Esophagus muscularis mucosa (tissue), 4 donors: ENCODE measurements at regions of chr20 and their contacts with region 1.

Region 1: DNA sequence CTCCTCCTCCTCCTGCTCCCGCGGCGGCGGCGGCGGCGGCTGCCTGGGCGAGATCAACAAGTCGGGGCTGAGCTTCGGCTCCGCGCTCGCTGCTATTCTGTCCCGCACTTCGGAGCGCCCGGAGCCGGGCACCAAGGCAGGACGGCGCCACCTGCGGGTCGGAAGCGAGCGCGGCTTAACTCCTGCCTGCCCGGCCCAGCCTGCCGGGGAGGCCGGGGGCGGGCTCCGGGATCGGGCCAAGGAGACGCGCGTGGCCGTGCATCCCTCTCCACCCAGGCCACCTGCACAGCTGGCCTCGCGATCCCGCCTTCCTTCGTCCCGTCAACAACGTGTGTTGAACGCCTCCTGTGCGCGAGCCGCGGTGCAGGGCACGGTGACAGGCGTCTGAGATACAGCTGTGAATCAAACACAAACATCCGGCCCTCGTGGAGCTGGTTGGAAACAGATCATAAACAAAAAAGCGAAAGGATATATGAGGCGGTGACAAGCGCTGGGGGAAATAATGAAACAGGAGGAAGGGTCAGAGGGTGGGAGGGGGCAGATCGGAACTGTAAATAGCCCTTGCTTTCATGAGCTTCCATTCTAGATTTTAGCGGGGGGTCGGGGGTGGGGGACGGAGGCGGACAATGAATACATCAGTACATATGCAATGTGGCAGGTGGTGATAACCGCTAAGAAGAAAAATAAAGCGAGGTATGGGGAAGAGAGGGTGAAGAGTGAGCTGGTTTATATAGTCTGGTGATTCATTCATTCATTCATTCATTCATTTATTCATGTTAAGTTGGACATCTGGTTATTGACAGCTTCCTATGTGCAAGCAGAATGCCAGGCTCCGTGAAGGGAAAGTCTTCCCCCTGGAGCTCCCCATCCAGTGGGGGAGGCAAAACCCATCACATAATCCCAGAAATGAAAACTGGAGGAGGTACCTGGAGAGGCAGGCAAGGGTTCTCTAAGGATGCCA is 2.0 kb upstream of the KCNB1 start:
- DNase-seq: no peak
- H3K4me3 ChIP-seq: peak overlapping the region; percentile 71 to 77 (median 73)
- H3K27ac ChIP-seq: peak overlapping the region; percentile 34 to 92 (median 88)
- H3K4me1 ChIP-seq: peaks cover 12 to 54% (median 51%) of the 10 kb centered on the region in 4 donors
- H3K27me3 ChIP-seq: peaks cover 0 to 18% (median 0%) of the 10 kb centered on the region in 4 donors
- CTCF ChIP-seq: peak; percentile 85 to 88 (median 86)
- EP300 ChIP-seq: no peak
- POLR2A ChIP-seq: no peak

Region 2: DNA sequence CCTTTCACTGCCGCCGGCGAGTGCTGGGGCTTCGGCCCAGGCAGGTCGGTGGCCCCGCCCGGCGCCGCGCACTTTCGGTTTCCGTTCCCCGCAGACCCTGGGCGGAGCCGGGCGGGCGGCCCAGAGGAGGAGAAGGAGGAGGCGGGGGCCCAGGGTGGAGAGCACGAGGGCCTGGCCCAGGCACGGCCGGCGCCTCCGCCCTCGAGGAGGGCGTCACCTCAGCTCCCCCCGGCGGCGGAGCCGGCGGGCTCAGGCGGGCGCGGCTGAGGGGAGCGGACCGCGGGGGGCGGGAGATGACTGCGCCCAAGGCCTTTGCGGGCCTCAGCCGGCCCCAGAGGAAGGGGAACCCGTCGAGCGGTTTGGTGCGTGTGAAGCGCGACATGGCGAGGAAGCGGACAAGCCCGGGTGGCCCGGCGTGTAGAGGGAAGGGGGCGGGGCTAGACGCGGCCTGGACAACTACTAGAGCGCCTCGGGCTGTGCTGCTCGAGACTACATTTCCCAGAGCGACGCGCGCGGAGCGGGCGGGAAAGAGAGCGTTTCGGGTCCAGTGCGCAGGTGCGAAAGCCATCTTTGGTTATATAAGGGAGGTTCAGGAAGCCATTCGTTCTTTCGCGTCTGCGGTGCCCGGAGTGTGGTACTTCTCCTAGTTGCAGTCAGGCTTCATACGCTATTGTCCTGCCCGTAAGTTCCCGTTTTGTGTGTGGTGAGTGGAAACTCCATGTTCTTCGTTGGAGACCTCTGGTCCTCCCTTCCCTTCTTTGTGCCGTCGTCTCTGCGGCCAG is 206.2 kb before region 1 on chr20 and contains the start of gene ZNFX1:
- intact Hi-C with region 1: no loop called
- DNase-seq: peak; percentile 99
- H3K4me3 ChIP-seq: peak within 1 kb of the TSS; percentile 77 to 98 (median 87)
- H3K27ac ChIP-seq: peak within 1 kb of the TSS; percentile 91 to 99 (median 96)
- H3K4me1 ChIP-seq: peaks cover 39 to 80% (median 71%) of the 10 kb centered on the region in 4 donors
- H3K27me3 ChIP-seq: no peaks in the 10 kb centered on the region
- CTCF ChIP-seq: no peak
- EP300 ChIP-seq: no peak
- POLR2A ChIP-seq: peak; percentile 98
- total RNA-seq, gene ZNFX1: 35.7 to 46.7 (median 41.3) TPM

Region 3: GRCh38 chr20:49338061-49338460 is 146.4 kb before region 1 on chr20:
- intact Hi-C with region 1: loop called (anchors 2 kb)
- DNase-seq: no peak
- H3K4me3 ChIP-seq: no peak overlapping the region
- H3K27ac ChIP-seq: no peak overlapping the region
- H3K4me1 ChIP-seq: peaks cover 0 to 37% (median 22%) of the 10 kb centered on the region in 4 donors
- H3K27me3 ChIP-seq: no peaks in the 10 kb centered on the region
- CTCF ChIP-seq: no peak
- EP300 ChIP-seq: no peak
- POLR2A ChIP-seq: no peak

Region 4: DNA sequence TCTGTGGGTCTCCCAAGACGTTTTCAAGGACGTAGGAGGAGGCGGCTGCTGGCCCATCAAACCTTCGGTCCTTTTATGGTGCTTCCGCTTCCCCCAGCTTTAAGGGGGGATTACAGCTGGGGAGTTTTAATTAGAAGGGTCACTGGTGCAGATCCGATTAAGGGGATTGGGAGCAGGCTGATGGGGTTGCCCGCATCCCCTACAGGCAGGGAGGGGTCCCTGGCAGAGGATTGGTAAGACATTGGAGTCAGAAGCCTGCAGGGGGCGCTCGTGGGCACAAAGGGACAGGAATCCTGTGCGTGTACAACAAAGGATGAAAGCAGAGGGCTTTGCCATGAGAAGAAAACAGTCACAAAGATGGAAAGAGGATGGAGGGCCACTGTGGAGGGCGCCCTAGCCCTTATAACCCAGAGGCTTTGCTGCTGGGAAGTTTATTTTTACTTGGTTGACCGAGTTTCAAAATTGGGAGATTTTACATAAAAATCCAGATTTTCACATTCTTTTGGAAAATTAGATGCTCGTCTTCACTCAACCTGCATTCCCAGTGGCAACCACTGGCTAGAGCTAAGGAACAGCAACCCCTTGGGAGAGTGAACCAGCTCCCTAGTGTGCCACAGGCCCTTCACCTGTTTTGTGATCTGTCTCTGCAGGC is 99.9 kb before region 1 on chr20:
- intact Hi-C with region 1: loop called (anchors 2 kb)
- DNase-seq: no peak
- H3K4me3 ChIP-seq: no peak overlapping the region
- H3K27ac ChIP-seq: peak overlapping the region; percentile 69 to 94 (median 88)
- H3K4me1 ChIP-seq: peaks cover 30 to 95% (median 89%) of the 10 kb centered on the region in 4 donors
- H3K27me3 ChIP-seq: no peaks in the 10 kb centered on the region
- CTCF ChIP-seq: peak; percentile 64 to 75 (median 71)
- EP300 ChIP-seq: no peak
- POLR2A ChIP-seq: no peak

Region 5: GRCh38 chr20:49446808-49447207 is 37.7 kb before region 1 on chr20:
- intact Hi-C with region 1: loop called (anchors 5 kb)
- DNase-seq: peak; percentile 94
- H3K4me3 ChIP-seq: peak overlapping the region; percentile 3 to 46 (median 24)
- H3K27ac ChIP-seq: peak overlapping the region; percentile 85 to 88 (median 86)
- H3K4me1 ChIP-seq: peaks cover 37 to 96% (median 92%) of the 10 kb centered on the region in 4 donors
- H3K27me3 ChIP-seq: no peaks in the 10 kb centered on the region
- CTCF ChIP-seq: peak in 2 of 3 experiments; percentile 29 to 53
- EP300 ChIP-seq: peak; percentile 21
- POLR2A ChIP-seq: no peak

Region 6: DNA sequence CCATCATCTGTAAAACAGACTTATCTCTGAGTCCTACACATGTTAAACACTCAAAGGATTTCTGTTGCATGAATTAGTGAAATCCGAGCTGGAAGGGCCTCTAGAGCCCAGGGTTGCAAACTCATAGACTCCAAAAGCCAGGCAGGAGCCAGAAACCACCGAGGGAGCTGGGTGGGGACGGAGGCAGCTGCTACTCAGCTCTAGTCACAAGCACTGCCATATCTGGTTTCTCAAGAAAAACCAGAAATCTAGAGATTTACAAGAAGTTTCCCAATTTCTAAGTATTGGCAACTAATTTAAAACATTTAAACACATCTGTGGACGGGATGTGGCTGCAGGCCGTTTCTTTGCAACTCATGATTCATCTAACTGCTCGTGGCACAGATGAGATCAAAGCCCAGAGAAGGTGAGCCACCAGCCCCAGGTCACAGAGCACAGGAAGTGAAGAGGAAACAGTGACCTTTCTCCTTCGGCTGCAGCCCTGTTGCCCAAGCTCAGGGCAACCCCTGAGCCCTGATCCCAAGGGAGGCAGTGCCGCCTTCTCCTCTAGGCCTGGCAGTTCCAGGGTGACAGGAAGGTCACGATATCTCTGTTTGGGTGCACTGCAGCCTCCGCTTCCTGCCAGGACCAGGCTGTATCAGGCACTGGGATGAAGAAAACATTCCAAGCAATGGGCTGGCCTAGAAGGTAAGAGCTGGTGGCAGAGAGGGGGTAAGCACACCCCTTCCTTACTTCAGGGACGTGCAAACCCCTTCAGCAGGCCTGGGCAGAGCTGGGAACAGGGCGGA is 109.9 kb after region 1 on chr20:
- intact Hi-C with region 1: no loop called
- DNase-seq: no peak
- H3K4me3 ChIP-seq: no peak overlapping the region
- H3K27ac ChIP-seq: peak overlapping the region; percentile 60 to 74 (median 68)
- H3K4me1 ChIP-seq: peaks cover 30 to 40% (median 37%) of the 10 kb centered on the region in 4 donors
- H3K27me3 ChIP-seq: no peaks in the 10 kb centered on the region
- CTCF ChIP-seq: no peak
- EP300 ChIP-seq: no peak
- POLR2A ChIP-seq: no peak